Esophagus muscularis mucosa (tissue), 4 donors: ENCODE measurements at regions of chr18 and their contacts with region 1.

Region 1: GRCh38 chr18:58186258-58186948 is 142.4 kb downstream of the NEDD4L start:
- DNase-seq: no peak
- H3K4me3 ChIP-seq: no peak overlapping the region
- H3K27ac ChIP-seq: peak overlapping the region; percentile 23 to 68 (median 48)
- H3K4me1 ChIP-seq: peaks cover 13 to 35% (median 27%) of the 10 kb centered on the region in 4 donors
- H3K27me3 ChIP-seq: no peaks in the 10 kb centered on the region
- CTCF ChIP-seq: no peak
- EP300 ChIP-seq: no peak
- POLR2A ChIP-seq: no peak

Region 2: DNA sequence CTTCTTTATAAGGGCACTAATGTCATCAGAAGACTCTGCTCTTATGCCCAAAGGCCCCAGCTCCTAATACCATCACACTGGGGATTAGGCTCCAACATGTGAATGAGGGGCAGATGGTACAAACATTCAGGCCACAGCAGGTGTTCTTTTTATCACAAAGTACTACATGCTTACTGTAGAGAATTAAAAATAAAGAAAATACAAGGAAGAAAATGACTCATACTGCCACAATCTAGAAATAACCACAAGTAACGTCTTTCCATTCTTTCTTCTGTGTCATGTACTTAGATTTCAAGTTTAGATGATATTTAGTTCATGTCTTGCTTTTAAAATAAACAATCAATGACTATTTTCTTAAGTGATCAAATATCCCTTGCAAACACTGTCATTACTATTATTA is 242.7 kb before region 1 on chr18:
- intact Hi-C with region 1: no loop called
- DNase-seq: peak; percentile 19
- H3K4me3 ChIP-seq: no peak overlapping the region
- H3K27ac ChIP-seq: no peak overlapping the region
- H3K4me1 ChIP-seq: no peaks in the 10 kb centered on the region
- H3K27me3 ChIP-seq: no peaks in the 10 kb centered on the region
- CTCF ChIP-seq: no peak
- EP300 ChIP-seq: no peak
- POLR2A ChIP-seq: no peak

Region 3: DNA sequence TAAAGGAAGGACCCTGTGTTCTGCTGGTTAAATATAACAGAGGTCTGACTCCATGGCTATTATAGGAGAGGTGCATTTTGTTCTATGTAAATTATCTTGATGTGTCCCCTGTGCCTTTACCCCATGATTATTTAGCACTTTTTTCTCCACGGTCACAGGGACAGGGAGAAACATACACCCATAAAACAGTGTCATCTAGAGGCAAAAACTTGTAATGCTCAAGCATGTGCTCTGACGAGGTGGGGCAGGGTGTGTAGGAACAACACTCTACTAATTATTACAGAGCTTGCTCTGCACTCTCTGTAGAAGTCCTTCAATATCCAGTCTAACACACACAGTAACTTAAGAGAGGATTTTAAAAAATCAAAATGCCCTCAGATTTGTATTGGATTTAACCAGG is 45.5 kb after region 1 on chr18:
- intact Hi-C with region 1: loop called (anchors 5 kb)
- DNase-seq: no peak
- H3K4me3 ChIP-seq: no peak overlapping the region
- H3K27ac ChIP-seq: peak overlapping the region in 1 of 4 donors; percentile 48
- H3K4me1 ChIP-seq: peaks cover 0 to 14% (median 7%) of the 10 kb centered on the region in 4 donors
- H3K27me3 ChIP-seq: no peaks in the 10 kb centered on the region
- CTCF ChIP-seq: peak; percentile 36 to 48 (median 40)
- EP300 ChIP-seq: no peak
- POLR2A ChIP-seq: no peak